ENCODE measurements at regions of chr1 and their contacts with region 1.

Region 1: GRCh38 chr1:40691538-40692428 is at the start of gene NFYC:
- DNase-seq: peak; percentile 99
- H3K4me3 Mint-ChIP-seq: peak within 1 kb of the TSS; percentile 97
- H3K27ac Mint-ChIP-seq: peak within 1 kb of the TSS; percentile 96
- H3K4me1 Mint-ChIP-seq: peaks cover 51% of the 10 kb centered on the region
- H3K27me3 Mint-ChIP-seq: no peaks in the 10 kb centered on the region
- total RNA-seq, gene NFYC: 53.5 to 63.1 TPM

Region 2: DNA sequence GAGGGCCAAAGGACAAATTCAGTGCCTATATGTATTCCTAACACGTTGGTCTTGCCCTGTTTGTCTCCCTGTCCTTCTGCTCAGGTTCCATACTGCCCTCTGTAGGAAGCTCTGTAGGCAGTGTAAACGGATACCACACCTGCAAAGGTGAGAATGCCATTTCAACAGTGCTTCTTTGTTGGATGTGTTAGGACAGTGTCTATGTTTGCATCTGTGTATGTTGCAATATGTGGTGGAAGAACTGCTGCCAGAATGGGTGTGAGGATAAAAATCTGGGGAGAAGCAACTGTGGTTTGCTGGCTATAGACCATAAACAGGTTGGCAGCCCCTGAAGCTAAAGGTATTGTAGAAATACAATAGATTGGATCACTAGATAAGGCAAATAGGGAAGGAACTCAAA is 1313.4 kb before region 1 on chr1:
- CTCF ChIA-PET with region 1: no interaction called
- intact Hi-C with region 1: no loop called
- DNase-seq: no peak
- H3K4me3 Mint-ChIP-seq: no peak overlapping the region
- H3K27ac Mint-ChIP-seq: no peak overlapping the region
- H3K4me1 Mint-ChIP-seq: no peaks in the 10 kb centered on the region
- H3K27me3 Mint-ChIP-seq: no peaks in the 10 kb centered on the region

Region 3: GRCh38 chr1:40161125-40161887 is 530.5 kb before region 1 on chr1 and contains the start of gene RLF:
- CTCF ChIA-PET with region 1: no interaction called
- intact Hi-C with region 1: loop called (anchors 5 kb)
- DNase-seq: peak; percentile 97
- H3K4me3 Mint-ChIP-seq: peak within 1 kb of the TSS; percentile 10
- H3K27ac Mint-ChIP-seq: no peak within 1 kb of the TSS
- H3K4me1 Mint-ChIP-seq: peaks cover 5% of the 10 kb centered on the region
- H3K27me3 Mint-ChIP-seq: no peaks in the 10 kb centered on the region
- total RNA-seq, gene RLF: 12.5 to 12.9 TPM

Region 4: DNA sequence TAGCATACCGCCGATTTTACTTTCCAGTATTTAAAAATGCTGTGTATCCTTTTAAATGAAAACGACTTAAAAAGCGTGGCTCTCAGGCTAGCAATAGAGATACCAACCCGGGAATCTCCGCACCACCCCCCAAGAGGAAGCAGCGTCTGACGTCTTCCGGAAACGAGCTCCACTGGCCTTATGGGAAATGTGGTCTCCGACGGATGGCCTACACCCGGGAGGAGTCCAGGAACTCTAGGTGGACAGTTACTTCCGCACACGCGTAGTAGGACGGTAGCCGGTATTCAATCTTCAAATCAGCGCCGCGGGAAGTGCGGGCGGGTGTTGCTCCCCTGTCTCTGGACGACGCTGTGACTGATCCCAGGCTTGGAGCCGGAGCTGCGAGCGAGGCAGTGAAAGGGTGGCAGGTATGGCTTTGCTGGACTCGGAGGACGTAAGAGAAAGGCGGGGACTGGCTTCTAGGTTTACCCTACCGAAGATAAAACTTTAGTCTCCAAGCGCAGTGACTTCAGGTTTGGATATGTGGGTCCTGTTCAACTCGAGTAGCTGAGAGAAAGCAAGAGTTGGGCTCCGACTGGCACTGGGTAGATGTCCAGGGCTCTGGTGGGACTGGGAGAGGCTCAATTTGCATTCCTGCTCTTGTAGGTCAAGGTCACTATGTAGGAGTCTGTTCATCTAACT is 160.3 kb before region 1 on chr1 and contains the start of gene ZNF684:
- CTCF ChIA-PET with region 1: no interaction called
- intact Hi-C with region 1: loop called (anchors 5 kb)
- DNase-seq: peak; percentile 94
- H3K4me3 Mint-ChIP-seq: peak within 1 kb of the TSS; percentile 99
- H3K27ac Mint-ChIP-seq: peak within 1 kb of the TSS; percentile 91
- H3K4me1 Mint-ChIP-seq: peaks cover 18% of the 10 kb centered on the region
- H3K27me3 Mint-ChIP-seq: peaks cover 4% of the 10 kb centered on the region
- total RNA-seq, gene ZNF684: 6.8 to 7.0 TPM

Region 5: DNA sequence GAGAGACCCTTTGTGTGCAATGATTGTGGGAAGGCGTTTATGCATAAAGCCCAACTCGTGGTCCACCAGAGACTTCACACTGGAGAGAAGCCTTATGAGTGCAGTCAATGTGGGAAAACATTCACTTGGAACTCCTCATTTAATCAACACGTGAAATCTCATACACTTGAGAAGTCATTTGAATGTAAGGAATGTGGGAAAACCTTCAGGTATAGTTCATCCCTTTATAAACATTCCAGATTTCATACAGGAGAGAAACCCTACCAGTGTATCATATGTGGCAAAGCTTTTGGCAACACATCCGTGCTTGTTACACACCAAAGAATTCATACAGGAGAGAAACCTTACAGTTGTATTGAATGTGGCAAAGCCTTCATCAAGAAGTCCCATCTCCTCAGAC is 144.8 kb before region 1 on chr1:
- CTCF ChIA-PET with region 1: no interaction called
- intact Hi-C with region 1: no loop called
- DNase-seq: no peak
- H3K4me3 Mint-ChIP-seq: no peak overlapping the region
- H3K27ac Mint-ChIP-seq: no peak overlapping the region
- H3K4me1 Mint-ChIP-seq: no peaks in the 10 kb centered on the region
- H3K27me3 Mint-ChIP-seq: no peaks in the 10 kb centered on the region

Region 6: GRCh38 chr1:40658751-40659648 is 32.8 kb before region 1 on chr1:
- CTCF ChIA-PET with region 1: no interaction called
- intact Hi-C with region 1: no loop called
- DNase-seq: no peak
- H3K4me3 Mint-ChIP-seq: no peak overlapping the region
- H3K27ac Mint-ChIP-seq: no peak overlapping the region
- H3K4me1 Mint-ChIP-seq: peaks cover 12% of the 10 kb centered on the region
- H3K27me3 Mint-ChIP-seq: no peaks in the 10 kb centered on the region

Region 7: GRCh38 chr1:40709100-40709801 is 17.5 kb after region 1 on chr1:
- CTCF ChIA-PET with region 1: interaction called, 5 read pairs
- intact Hi-C with region 1: loop called (anchors 1 kb)
- DNase-seq: peak; percentile 86
- H3K4me3 Mint-ChIP-seq: peak overlapping the region; percentile 84
- H3K27ac Mint-ChIP-seq: peak overlapping the region; percentile 90
- H3K4me1 Mint-ChIP-seq: peaks cover 58% of the 10 kb centered on the region
- H3K27me3 Mint-ChIP-seq: no peaks in the 10 kb centered on the region

Region 8: DNA sequence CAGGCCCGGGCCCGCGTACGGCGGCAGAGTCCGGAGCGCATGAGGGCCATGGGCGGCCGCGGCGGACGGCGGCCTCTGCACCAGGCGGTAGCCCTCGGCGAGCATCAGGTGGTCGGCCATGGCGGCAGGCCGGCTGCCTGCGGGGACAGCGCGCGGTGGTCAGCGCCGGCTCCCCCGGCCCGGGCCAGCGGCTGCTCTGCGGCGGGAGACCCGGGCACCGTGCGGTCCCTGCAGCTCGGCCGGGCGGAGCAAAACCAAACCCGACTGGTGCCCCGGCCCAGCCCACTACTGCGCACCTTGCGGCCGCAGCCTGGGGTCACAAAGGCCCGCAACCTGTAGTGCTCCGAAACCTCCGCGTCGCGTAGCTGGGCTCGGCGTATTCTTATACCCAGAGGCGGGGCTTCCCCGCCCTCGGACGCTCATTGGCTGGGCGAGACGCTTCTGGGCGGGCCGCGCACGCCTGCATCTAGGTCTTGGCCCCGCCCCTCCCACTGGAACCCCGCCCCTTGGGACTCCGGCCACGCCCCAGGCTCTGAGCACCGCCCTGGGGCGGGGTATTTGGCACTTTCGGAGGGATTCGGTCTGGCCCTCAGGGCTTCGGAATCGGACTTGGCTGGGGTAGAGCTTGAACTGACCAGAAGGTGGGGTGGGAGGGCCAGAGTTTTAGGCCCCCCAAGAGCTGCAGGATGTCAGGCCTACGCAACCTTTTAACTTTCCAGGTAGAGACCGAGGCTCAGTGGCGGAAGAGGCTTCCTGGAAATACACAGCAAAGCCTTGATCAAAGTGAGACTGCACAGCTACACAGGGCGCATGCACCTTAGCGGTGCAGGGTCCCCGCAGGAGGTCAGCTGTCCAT is 170.5 kb after region 1 on chr1 and contains the start of gene CITED4:
- CTCF ChIA-PET with region 1: no interaction called
- intact Hi-C with region 1: loop called (anchors 2 kb)
- DNase-seq: peak; percentile 95
- H3K4me3 Mint-ChIP-seq: peak within 1 kb of the TSS; percentile 92
- H3K27ac Mint-ChIP-seq: peak within 1 kb of the TSS; percentile 95
- H3K4me1 Mint-ChIP-seq: peaks cover 11% of the 10 kb centered on the region
- H3K27me3 Mint-ChIP-seq: peaks cover 8% of the 10 kb centered on the region
- total RNA-seq, gene CITED4: 2.4 TPM

Region 9: DNA sequence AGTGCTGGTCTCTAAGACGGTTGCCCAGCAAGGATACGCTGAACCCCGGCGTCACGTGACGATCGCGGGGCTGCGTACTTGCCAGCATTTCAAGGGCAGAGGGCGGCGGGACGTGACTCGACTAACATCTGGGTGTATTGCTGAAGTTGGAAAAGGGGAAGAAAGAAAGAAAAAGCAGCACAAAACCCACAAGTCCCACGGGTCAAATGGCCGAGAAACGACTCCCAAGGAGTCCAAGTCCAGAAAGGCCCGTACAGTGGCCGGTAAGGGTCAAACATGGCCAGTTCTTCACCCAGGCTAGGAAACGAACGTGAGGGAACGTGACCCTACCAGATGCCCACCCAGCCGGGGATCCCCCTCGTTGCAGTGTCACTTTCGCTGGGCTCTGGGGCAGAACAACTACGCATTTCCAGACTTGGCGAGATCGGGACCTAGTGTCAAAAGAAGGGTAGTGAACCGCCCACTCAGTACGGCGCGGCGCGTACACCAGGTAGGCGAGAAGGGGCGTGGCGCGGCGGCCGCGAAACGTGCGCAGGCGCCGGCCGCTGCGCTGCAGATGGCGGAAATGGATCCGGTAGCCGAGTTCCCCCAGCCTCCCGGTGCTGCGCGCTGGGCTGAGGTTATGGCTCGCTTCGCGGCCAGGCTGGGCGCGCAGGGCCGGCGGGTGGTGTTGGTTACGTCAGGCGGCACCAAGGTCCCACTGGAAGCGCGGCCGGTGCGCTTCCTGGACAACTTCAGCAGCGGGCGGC is 1764.4 kb after region 1 on chr1 and contains the starts of genes PPCS and ZMYND12:
- CTCF ChIA-PET with region 1: no interaction called
- intact Hi-C with region 1: loop called (anchors 10 kb)
- DNase-seq: peak; percentile 94
- H3K4me3 Mint-ChIP-seq: peak within 1 kb of the TSS; percentile 95
- H3K27ac Mint-ChIP-seq: peak within 1 kb of the TSS; percentile 94
- H3K4me1 Mint-ChIP-seq: peaks cover 23% of the 10 kb centered on the region
- H3K27me3 Mint-ChIP-seq: no peaks in the 10 kb centered on the region
- total RNA-seq, gene PPCS: 47.4 to 49.6 TPM
- total RNA-seq, gene ZMYND12: 0.74 to 0.76 TPM